Brain microvascular endothelial cell (primary cell): ENCODE measurements at regions of chr14 and their contacts with region 1.

Region 1: DNA sequence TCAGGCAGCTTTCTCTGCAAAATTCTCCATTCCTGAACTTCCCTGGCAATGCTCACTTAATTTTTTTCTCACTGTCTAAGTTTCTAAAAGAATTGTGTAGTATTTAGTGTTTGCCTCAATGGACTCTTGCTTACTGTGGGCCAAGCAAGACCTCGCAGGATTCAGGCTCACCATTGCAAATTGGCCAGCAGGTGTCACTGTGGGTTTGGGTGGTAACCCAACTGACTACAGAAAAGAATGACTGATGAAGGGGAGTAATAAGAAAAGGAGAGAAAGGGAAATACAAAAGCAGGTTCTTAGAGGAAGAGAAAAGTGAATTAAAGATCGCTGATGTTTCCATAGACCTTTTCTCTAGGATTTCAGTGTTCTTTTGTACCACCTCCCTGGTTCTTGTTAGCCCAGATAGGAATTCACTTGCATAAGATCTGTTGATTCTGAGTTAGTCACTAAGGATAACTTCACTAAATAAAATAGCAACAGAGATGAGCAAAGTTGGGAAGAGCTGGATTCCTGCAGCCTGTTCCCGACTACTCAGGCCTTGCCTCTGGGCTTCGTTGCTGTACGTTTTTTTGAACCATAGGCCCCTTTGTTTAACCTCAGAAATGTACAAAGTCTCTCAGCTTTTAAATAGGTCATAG is 386.5 kb upstream of the DDHD1 start:
- DNase-seq: peak; percentile 81
- H3K4me3 ChIP-seq: no peak overlapping the region
- H3K27ac ChIP-seq: no peak overlapping the region
- H3K27me3 ChIP-seq: no peaks in the 10 kb centered on the region
- CTCF ChIP-seq: peak; percentile 90

Region 2: GRCh38 chr14:53491256-53491883 is 48.2 kb before region 1 on chr14:
- in situ Hi-C with region 1: no loop called
- DNase-seq: no peak
- H3K4me3 ChIP-seq: no peak overlapping the region
- H3K27ac ChIP-seq: no peak overlapping the region
- H3K27me3 ChIP-seq: no peaks in the 10 kb centered on the region
- CTCF ChIP-seq: no peak

Region 3: GRCh38 chr14:53591816-53592215 is 52.2 kb after region 1 on chr14:
- in situ Hi-C with region 1: no loop called
- DNase-seq: no peak
- H3K4me3 ChIP-seq: no peak overlapping the region
- H3K27ac ChIP-seq: no peak overlapping the region
- H3K27me3 ChIP-seq: no peaks in the 10 kb centered on the region
- CTCF ChIP-seq: no peak

Region 4: GRCh38 chr14:54329082-54329695 is 789.6 kb after region 1 on chr14:
- in situ Hi-C with region 1: loop called (anchors 25 kb)
- DNase-seq: peak; percentile 36
- H3K4me3 ChIP-seq: no peak overlapping the region
- H3K27ac ChIP-seq: no peak overlapping the region
- H3K27me3 ChIP-seq: no peaks in the 10 kb centered on the region
- CTCF ChIP-seq: peak; percentile 92